ENCODE measurements at regions of chr6 and their contacts with region 1.

Region 1: DNA sequence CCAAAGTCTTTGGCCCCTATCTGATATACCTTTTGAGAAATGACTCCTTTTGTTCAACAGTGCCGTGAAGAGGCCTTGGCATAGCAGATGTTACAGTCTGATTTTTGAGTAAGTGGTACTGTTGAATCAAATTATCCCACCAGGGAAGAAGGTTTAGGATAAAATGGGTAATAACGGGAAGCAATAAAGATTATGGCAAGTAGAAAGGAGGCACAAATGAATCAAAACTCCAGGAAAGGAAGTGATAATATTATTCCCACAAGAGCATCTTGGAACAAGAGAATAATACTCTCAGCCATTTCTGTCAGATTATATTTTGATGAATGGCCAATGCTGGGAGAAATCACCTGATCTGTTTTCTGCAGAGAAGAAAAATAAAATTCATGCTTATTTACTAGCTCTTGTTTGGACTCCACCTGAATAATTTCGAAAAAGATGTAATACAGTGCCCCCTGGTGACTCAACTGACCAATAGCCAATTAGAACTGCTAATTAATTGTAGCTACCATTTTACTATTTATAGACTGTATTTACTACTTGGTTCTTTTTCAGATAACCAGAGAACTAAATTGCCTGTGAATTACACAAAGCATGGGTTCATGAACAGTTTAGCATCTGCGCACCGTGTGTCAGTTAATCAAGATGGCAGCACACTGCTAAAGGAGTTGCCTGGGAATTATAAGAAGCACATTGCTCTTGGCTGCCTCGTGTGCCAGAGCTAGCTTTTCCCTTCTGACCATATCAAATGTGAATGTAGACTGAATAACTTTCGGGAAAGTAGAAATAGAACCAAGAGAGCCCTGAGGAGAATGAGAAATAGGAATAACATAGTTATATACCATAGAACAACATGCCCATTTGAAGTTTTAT is 78.5 kb upstream of the TRDN start:
- DNase-seq: peak in 1 of 2 donors; percentile 48
- H3K4me3 ChIP-seq: no peak overlapping the region
- H3K27ac ChIP-seq: no peak overlapping the region
- H3K4me1 ChIP-seq: no peaks in the 10 kb centered on the region
- H3K27me3 ChIP-seq: no peaks in the 10 kb centered on the region
- CTCF ChIP-seq: peak in 4 of 7 experiments; percentile 17 to 38 (median 26)
- EP300 ChIP-seq: no peak
- POLR2A ChIP-seq: no peak

Region 2: GRCh38 chr6:123415844-123416468 is 299.3 kb before region 1 on chr6:
- intact Hi-C with region 1: loop called (anchors 5 kb)
- DNase-seq: peak; percentile 53 to 80
- H3K4me3 ChIP-seq: no peak overlapping the region
- H3K27ac ChIP-seq: no peak overlapping the region
- H3K4me1 ChIP-seq: no peaks in the 10 kb centered on the region
- H3K27me3 ChIP-seq: no peaks in the 10 kb centered on the region
- CTCF ChIP-seq: peak in 5 of 7 experiments; percentile 29 to 62 (median 57)
- EP300 ChIP-seq: no peak
- POLR2A ChIP-seq: no peak